A549 (cell line): ENCODE measurements at regions of chr9 and their contacts with region 1.

Region 1: DNA sequence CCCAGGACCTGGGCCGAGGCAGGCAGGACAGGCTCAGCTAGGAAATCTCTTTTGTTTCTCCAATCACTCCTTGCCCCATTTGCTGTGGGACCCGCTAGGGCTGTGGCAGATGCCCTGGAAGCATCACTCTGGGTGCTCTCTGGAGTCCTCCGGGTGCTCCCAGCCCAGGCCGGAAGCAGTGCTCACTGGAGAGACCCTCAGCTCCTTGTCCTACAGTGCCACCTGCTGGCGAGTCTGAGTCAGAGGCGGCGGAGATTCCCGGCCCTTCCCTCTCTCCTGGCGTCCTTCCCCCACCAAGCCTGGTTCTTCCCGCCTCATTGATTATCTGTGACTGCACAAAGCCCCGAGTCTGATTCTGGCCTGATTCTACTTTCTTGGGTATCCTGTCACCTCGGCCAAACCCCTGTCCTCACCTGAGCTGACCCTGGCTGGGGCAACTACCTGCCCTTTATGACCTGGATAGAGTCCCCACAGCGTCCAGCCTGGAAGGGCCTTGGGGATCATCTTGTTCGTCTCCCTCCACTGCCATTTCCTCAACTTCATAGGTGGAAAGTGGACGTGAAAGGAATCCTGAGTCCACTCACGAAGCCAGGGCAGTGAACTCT is 7.3 kb upstream of the BARHL1 start:
- DNase-seq: peak; percentile 75 to 88
- ATAC-seq: peak; percentile 88 to 95
- H3K4me3 ChIP-seq: no peak overlapping the region
- H3K27ac ChIP-seq: no peak overlapping the region
- H3K4me1 ChIP-seq: no peaks in the 10 kb centered on the region
- CTCF ChIP-seq: peak; percentile 84
- EP300 ChIP-seq: no peak
- POLR2A ChIP-seq: no peak
- RAD21 ChIP-seq: peak; percentile 94 to 96

Region 2: GRCh38 chr9:132169672-132170392 is 405.3 kb before region 1 on chr9:
- CTCF ChIA-PET with region 1: interaction called, 11 read pairs
- POLR2A ChIA-PET with region 1: no interaction called
- DNase-seq: peak; percentile 58 to 66
- ATAC-seq: peak; percentile 66 to 85
- H3K4me3 ChIP-seq: no peak overlapping the region
- H3K27ac ChIP-seq: no peak overlapping the region
- H3K4me1 ChIP-seq: peaks cover 6% of the 10 kb centered on the region
- CTCF ChIP-seq: peak; percentile 84
- EP300 ChIP-seq: no peak
- POLR2A ChIP-seq: no peak
- RAD21 ChIP-seq: peak; percentile 61 to 67

Region 3: DNA sequence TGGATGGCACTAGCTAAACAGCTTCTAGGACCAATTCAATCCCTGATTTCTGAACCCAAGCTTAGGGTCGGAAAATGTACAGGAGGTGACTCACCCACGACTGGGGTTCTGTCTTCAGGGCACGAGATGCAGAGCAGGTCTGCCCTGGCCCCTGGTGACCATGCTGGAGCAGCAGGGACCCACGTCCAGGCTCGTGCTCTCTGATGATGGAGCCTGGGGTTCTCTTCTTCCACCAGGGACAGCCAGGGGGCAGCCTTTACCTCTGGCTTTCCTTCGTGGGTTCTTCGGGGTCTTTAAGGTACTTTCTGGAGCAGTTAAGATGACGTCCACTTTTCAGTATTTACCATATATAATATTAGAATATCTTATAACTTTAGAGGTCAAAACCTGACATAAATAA is 163.0 kb before region 1 on chr9:
- CTCF ChIA-PET with region 1: interaction called, 28 read pairs
- POLR2A ChIA-PET with region 1: no interaction called
- DNase-seq: peak in 1 of 2 experiments; percentile 27
- ATAC-seq: peak in 1 of 2 experiments; percentile 16; a peak in 1 of 6 replicates
- H3K4me3 ChIP-seq: no peak overlapping the region
- H3K27ac ChIP-seq: no peak overlapping the region
- H3K4me1 ChIP-seq: peaks cover 6% of the 10 kb centered on the region; the same call in 1 of the 3 replicates
- CTCF ChIP-seq: peak; percentile 31; the same call in 1 of the 3 replicates
- EP300 ChIP-seq: no peak
- POLR2A ChIP-seq: no peak
- RAD21 ChIP-seq: peak; percentile 15 to 26; a peak in 1 of 5 replicates

Region 4: DNA sequence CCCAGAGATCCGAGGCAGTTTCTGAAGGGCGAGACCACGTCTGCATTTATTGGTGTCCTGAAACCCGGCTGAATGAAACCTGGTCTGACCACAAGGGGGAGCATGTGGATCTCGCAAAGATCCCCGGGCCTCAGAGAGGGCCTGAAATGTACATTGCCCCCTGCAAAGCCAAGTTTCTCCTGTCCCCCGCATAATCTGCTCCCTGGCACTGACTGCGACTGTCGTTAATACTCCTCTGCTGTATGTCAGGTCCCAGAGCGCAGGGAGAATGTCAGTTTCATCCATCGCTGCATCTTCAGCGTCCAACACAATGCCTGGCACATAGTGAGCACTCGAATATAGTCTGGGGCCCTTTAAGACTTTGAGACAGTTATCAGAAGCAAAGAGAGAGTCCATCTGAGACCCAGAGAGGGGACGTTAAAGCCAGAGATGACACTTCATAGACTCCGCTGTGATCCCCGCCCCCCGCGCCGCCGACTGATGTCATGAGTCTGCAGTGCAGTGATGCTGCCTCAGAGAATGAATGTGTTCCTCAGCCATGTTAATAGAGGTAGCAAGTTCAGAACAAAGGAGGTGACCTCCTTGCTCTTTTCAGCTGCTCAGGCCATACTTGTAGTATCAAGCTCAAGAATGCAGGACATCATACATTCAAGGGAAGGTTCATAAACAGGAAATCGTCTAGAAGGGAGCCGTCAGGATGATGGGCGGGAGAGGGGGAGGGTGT is 67.2 kb before region 1 on chr9:
- CTCF ChIA-PET with region 1: interaction called, 176 read pairs
- POLR2A ChIA-PET with region 1: no interaction called
- DNase-seq: peak; percentile 69 to 95
- ATAC-seq: peak; percentile 80 to 93
- H3K4me3 ChIP-seq: no peak overlapping the region
- H3K27ac ChIP-seq: no peak overlapping the region
- H3K4me1 ChIP-seq: no peaks in the 10 kb centered on the region
- CTCF ChIP-seq: peak; percentile 81
- EP300 ChIP-seq: no peak
- POLR2A ChIP-seq: no peak
- RAD21 ChIP-seq: peak; percentile 82 to 86

Region 5: GRCh38 chr9:132548766-132549640 is 26.1 kb before region 1 on chr9:
- CTCF ChIA-PET with region 1: interaction called, 13 read pairs
- POLR2A ChIA-PET with region 1: no interaction called
- DNase-seq: no peak
- ATAC-seq: no peak
- H3K4me3 ChIP-seq: no peak overlapping the region
- H3K27ac ChIP-seq: no peak overlapping the region
- H3K4me1 ChIP-seq: 0 out of 3 replicates have a peak, but pooled peaks cover 3% of the 10 kb centered on the region
- CTCF ChIP-seq: no peak
- EP300 ChIP-seq: no peak
- POLR2A ChIP-seq: no peak
- RAD21 ChIP-seq: no peak

Region 6: DNA sequence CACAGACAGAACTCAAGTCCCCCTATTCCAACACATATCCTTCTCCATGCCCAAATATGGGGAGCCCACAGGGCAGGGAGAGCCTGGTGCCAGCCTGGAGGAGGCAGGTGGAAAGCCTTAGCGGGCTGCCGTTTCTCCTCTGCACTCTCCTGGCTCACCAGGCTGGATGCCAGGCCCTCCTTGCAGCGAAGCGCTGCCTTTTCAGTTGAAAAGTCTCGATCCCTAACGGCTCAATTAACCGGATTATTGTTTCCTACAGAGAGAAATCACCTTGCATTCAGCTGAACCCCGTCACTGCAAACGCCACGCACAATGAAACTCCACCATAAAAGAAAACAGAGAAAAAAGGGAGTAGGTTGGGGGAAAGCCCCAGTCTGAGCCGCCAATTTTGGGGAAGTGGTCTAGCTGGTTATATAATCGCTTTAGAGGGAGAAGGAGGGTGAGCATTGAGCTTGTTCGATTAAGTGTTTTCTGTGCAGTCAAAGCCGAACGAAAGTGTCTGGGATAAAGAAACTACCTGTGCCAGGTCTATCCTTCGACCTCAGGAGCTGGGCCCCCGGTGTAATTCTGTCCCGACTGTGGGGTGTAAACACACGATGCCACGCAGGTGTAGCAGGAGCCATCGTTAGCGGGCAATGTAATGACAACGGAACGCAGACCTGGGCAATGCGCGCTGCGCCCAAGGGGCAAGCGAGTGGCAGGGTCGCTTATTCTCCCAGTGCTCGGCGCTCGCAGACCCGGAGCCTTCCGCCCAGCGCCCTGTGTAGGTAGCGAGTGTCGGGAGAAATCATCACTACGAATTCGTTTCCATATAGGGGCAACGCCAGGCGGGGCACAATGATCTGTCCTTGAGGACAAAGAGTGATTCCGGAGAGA is 11.1 kb after region 1 on chr9:
- CTCF ChIA-PET with region 1: interaction called, 11 read pairs
- POLR2A ChIA-PET with region 1: no interaction called
- DNase-seq: no peak
- ATAC-seq: no peak
- H3K4me3 ChIP-seq: no peak overlapping the region
- H3K27ac ChIP-seq: no peak overlapping the region
- H3K4me1 ChIP-seq: peaks cover 21% of the 10 kb centered on the region; the same call in 2 of the 3 replicates
- CTCF ChIP-seq: no peak
- EP300 ChIP-seq: no peak
- POLR2A ChIP-seq: no peak
- RAD21 ChIP-seq: no peak

Region 7: DNA sequence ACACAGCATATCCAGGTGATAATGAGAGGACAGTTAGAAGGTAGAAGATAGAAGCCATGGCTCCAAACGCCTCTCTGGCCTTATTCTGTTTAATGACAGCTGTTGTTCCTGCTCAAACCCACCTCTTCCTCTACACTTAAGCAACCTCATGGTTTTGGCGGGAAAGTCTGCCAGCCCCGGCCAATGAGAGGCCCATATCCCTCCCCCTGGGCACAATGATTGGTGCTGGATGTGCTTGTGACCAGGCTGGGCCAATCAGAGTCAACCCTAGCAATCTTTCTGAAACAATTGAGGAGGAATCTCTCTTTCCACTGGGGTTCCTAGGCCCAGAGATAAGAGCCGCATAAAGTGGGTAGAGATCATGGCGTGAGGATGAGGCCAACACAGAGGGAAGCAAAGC is 398.6 kb after region 1 on chr9:
- CTCF ChIA-PET with region 1: no interaction called
- POLR2A ChIA-PET with region 1: no interaction called
- DNase-seq: peak; percentile 45 to 56
- ATAC-seq: peak in 1 of 2 experiments; percentile 43; a peak in 3 of 6 replicates
- H3K4me3 ChIP-seq: no peak overlapping the region
- H3K27ac ChIP-seq: no peak overlapping the region
- H3K4me1 ChIP-seq: peaks cover 8% of the 10 kb centered on the region; the same call in 1 of the 3 replicates
- CTCF ChIP-seq: no peak
- EP300 ChIP-seq: no peak
- POLR2A ChIP-seq: no peak
- RAD21 ChIP-seq: no peak